ENCODE measurements at regions of chr19 and their contacts with region 1.

Region 1: DNA sequence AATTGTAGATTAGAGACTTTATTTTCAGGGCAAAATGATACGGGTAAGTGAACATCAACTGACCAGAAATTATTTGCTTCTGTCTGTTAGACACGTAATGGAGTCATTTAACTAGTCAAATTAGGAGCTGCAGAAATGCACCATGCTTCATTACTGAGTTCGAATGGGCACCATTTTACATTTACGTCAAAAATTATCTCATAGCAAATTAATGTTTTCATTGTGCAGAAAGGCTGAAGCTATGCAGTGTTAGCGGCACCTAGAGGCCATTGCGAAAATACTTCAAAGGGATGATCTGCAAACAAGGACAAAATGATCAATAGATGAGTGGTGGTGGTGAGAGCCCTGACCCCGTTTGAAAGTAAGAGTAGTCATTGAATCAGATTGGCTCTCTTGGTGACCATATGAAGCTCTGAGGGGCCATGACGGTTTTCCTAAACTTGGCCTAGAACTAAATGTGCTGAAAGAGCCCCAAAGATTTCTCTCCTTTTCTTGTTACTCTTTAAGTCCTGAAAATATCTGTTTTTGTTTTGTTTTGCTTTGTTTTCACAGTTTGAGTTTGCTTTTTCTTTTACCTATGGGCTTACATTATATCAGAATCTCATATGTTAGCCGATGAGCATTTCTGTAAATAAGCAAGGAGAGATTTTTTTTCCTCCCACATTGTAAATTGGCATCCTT is 277.9 kb downstream of the ZNF536 start:
- DNase-seq: peak; percentile 58
- H3K4me3 ChIP-seq: no peak overlapping the region
- H3K27ac ChIP-seq: no peak overlapping the region
- H3K4me1 ChIP-seq: no peaks in the 10 kb centered on the region
- CTCF ChIP-seq: peak; percentile 96

Region 2: DNA sequence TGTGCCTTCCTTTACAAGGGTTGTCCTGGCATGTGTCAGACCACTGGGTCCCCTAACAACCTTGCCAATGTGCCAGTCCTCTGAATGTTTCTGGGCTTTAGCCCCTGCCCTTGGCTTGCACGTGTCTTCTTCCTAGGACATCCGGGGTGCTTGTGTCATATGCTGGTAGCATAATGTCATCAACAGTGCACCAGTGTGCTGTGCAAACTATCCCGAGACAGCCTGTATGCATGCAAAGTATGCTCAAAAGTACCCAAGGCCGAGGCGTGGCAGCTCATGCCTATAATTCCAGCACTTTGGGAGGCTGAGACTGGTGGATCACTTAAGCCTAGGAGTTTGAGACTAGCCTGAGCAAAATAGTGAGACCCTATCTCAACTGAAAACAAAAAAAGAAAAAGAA is 914.3 kb before region 1 on chr19:
- CTCF ChIA-PET with region 1: no interaction called
- POLR2A ChIA-PET with region 1: no interaction called
- intact Hi-C with region 1: loop called (anchors 5 kb)
- DNase-seq: no peak
- H3K4me3 ChIP-seq: no peak overlapping the region
- H3K27ac ChIP-seq: no peak overlapping the region
- H3K4me1 ChIP-seq: no peaks in the 10 kb centered on the region
- CTCF ChIP-seq: no peak

Region 3: DNA sequence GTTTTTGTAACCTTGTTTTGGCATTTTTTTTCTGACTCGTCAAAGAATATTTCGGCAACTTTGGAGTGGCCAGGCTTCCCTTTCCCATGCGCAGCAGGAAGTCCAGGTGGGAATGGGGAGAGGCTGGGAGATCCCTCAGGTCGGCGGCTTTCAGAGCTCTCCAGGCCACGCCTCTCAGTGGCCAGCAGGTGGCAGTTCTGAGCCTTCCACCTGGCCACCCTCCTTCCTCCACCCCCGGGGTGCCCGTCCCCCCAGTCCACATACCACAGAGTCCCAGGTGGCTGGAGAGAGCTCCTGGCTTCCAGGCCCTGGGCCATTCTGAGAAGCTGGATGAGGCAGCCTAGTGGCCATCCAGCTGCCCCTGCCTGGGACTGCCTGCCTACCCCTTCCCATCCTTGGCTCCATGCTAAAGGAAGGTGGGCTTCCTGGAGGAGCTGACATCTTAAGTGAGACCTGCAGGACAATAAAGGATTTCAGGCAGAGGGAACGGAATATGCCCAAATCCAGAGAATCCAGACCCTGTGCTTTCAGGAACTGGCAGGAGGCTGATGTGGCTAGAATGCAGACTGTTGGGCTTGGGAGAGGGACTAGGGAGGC is 792.0 kb before region 1 on chr19:
- CTCF ChIA-PET with region 1: no interaction called
- POLR2A ChIA-PET with region 1: no interaction called
- intact Hi-C with region 1: loop called (anchors 10 kb)
- DNase-seq: peak; percentile 55
- H3K4me3 ChIP-seq: no peak overlapping the region
- H3K27ac ChIP-seq: no peak overlapping the region
- H3K4me1 ChIP-seq: no peaks in the 10 kb centered on the region
- CTCF ChIP-seq: peak; percentile 82

Region 4: DNA sequence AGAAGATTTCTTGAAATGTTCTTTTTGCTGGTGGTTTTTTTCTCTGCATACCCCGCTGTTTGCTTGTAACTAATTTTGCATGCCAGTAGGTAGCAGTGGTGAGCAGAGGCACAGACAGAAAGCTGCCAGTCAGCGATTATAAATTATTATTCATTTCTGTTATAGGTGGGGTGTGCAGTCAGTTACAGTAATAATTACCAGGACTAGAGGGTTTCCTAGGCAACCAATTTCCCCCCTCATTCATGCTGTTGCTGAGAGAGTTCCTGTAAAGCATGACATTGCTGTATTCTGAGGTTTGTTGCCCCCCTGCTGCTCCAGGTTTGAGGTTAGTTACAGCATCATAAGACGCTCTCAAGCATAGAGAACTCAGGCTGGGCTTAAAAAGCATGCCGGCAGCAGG is 603.6 kb before region 1 on chr19:
- CTCF ChIA-PET with region 1: no interaction called
- POLR2A ChIA-PET with region 1: no interaction called
- intact Hi-C with region 1: loop called (anchors 5 kb)
- DNase-seq: peak; percentile 26
- H3K4me3 ChIP-seq: no peak overlapping the region
- H3K27ac ChIP-seq: no peak overlapping the region
- H3K4me1 ChIP-seq: peaks cover 7% of the 10 kb centered on the region
- CTCF ChIP-seq: peak; percentile 79

Region 5: GRCh38 chr19:30227661-30228428 is 422.2 kb before region 1 on chr19:
- CTCF ChIA-PET with region 1: no interaction called
- POLR2A ChIA-PET with region 1: no interaction called
- intact Hi-C with region 1: loop called (anchors 1 kb)
- DNase-seq: peak; percentile 41
- H3K4me3 ChIP-seq: peak overlapping the region; percentile 53
- H3K27ac ChIP-seq: no peak overlapping the region
- H3K4me1 ChIP-seq: no peaks in the 10 kb centered on the region
- CTCF ChIP-seq: peak; percentile 61